Caco-2 (cell line): ENCODE measurements at regions of chr20 and their contacts with region 1.

Region 1: GRCh38 chr20:37693635-37694626 is at the start of gene CTNNBL1:
- DNase-seq: peak; percentile 100
- H3K4me3 ChIP-seq: peak within 1 kb of the TSS; percentile 53
- H3K4me3 Mint-ChIP-seq: peak within 1 kb of the TSS; percentile 92
- H3K27ac Mint-ChIP-seq: peak within 1 kb of the TSS; percentile 86
- H3K4me1 ChIP-seq: peaks cover 11% of the 10 kb centered on the region
- H3K4me1 Mint-ChIP-seq: peaks cover 5% of the 10 kb centered on the region
- H3K27me3 ChIP-seq: no peaks in the 10 kb centered on the region
- H3K27me3 Mint-ChIP-seq: peaks cover 3% of the 10 kb centered on the region
- CTCF ChIP-seq: no peak
- total RNA-seq, gene CTNNBL1: 203 and 204 TPM in 2 replicates

Region 2: GRCh38 chr20:37392421-37393178 is 301.3 kb before region 1 on chr20:
- CTCF ChIA-PET with region 1: no interaction called
- POLR2A ChIA-PET with region 1: no interaction called
- intact Hi-C with region 1: no loop called
- DNase-seq: peak in 1 of 2 experiments; percentile 59
- H3K4me3 ChIP-seq: no peak overlapping the region
- H3K4me3 Mint-ChIP-seq: no peak overlapping the region
- H3K27ac Mint-ChIP-seq: peak overlapping the region; percentile 20
- H3K4me1 ChIP-seq: peaks cover 22% of the 10 kb centered on the region
- H3K4me1 Mint-ChIP-seq: peaks cover 10% of the 10 kb centered on the region
- H3K27me3 ChIP-seq: no peaks in the 10 kb centered on the region
- H3K27me3 Mint-ChIP-seq: no peaks in the 10 kb centered on the region
- CTCF ChIP-seq: peak; percentile 32 to 46

Region 3: DNA sequence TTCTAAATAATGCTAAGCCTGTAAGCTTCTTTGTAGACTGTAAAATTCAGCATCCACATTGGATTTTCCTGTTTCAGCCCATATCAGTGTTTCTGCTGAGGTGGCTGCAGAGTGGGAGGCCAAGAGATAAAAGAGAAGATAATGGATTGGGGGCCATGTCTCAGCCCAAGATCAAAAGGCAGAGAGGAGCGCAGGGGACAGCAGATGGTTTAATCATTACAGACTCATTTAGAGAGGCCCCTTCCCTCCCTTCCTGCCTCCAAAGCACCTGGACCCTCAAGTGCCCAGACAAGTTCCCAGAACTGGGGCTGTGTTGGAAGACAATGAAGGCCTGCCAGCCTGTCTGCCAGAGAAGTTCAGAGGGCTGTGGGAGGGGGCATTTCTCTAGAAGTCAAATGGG is 20.5 kb before region 1 on chr20:
- CTCF ChIA-PET with region 1: interaction called, 3 read pairs
- POLR2A ChIA-PET with region 1: no interaction called
- intact Hi-C with region 1: loop called (anchors 2 kb)
- DNase-seq: peak; percentile 80 to 90
- H3K4me3 ChIP-seq: no peak overlapping the region
- H3K4me3 Mint-ChIP-seq: peak overlapping the region; percentile 4
- H3K27ac Mint-ChIP-seq: peak overlapping the region; percentile 20
- H3K4me1 ChIP-seq: peaks cover 37% of the 10 kb centered on the region
- H3K4me1 Mint-ChIP-seq: peaks cover 40% of the 10 kb centered on the region
- H3K27me3 ChIP-seq: no peaks in the 10 kb centered on the region
- H3K27me3 Mint-ChIP-seq: no peaks in the 10 kb centered on the region
- CTCF ChIP-seq: no peak

Region 4: DNA sequence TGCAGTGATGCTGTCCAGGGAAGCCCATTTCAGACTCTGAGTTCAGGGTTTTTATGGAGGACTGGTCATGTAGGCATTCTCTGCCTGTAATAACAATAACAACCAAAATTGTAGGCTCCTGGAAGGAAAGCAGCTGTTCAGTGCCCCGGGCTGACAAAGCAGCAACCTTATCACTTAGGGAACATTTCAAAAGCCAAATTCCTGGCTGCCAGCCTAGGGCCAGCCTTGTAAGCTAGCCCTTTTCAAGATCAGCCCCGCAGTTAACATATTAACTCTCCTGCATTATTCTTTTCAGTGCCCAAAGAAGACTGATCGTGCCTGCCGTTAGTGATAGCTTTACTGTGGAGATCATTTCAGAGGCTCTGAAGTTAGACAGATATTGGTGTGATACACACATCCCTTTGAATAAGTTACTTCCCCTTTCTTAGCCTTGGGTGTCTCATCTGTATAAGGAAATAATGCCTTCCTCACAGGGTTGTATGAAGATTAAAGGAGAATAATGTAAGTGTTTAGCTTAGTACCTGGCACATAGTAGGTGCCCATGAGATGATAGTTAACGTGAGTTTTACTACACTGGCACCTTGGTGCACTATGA is 44.0 kb after region 1 on chr20:
- CTCF ChIA-PET with region 1: no interaction called
- POLR2A ChIA-PET with region 1: no interaction called
- intact Hi-C with region 1: loop called (anchors 2 kb)
- DNase-seq: no peak
- H3K4me3 ChIP-seq: no peak overlapping the region
- H3K4me3 Mint-ChIP-seq: no peak overlapping the region
- H3K27ac Mint-ChIP-seq: no peak overlapping the region
- H3K4me1 ChIP-seq: peaks cover 38% of the 10 kb centered on the region
- H3K4me1 Mint-ChIP-seq: peaks cover 20% of the 10 kb centered on the region
- H3K27me3 ChIP-seq: no peaks in the 10 kb centered on the region
- H3K27me3 Mint-ChIP-seq: no peaks in the 10 kb centered on the region
- CTCF ChIP-seq: no peak

Region 5: GRCh38 chr20:37796121-37796520 is 102.2 kb after region 1 on chr20:
- CTCF ChIA-PET with region 1: no interaction called
- POLR2A ChIA-PET with region 1: no interaction called
- intact Hi-C with region 1: no loop called
- DNase-seq: no peak
- H3K4me3 ChIP-seq: no peak overlapping the region
- H3K4me3 Mint-ChIP-seq: no peak overlapping the region
- H3K27ac Mint-ChIP-seq: no peak overlapping the region
- H3K4me1 ChIP-seq: no peaks in the 10 kb centered on the region
- H3K4me1 Mint-ChIP-seq: no peaks in the 10 kb centered on the region
- H3K27me3 ChIP-seq: no peaks in the 10 kb centered on the region
- H3K27me3 Mint-ChIP-seq: no peaks in the 10 kb centered on the region
- CTCF ChIP-seq: no peak